ENCODE measurements at regions of chr5 and their contacts with region 1.

Region 1: DNA sequence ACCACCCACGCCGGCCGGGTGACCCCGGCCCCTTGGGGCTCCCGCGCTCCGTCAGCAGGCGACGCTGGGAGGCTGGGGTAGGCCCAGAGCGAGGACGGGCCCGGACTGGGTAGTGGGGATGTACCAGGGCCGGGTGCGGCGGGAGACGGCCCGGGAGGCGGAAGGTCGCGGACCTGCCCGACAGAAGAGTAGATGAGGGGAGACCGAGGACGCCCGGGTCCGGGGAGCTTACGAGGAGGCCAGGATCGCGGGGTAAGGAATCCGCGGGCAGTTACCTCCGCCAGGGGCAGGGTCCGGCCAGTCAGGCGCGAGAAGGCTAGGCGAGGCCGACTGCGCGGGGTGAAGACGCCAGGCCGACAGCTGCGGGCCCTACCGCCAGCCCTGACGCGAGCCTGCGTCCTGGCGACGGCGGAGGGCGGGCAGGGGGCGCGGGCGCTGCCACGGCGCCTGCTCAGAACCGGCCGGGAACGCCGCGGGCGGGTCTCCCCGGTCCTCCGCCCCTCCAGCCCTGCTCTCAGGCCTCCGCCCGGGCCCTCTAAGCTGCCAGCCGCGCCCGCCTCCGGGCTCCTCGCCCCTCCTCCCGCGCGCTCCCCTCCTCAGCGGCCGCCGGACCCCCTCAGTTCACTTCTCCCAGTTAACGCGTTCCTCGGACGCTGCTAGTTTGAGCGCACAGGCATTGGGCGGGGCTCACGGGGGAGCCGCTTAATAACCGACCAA is at the start of gene CPLANE1:
- DNase-seq: peak; percentile 35 to 72
- H3K4me3 ChIP-seq: peak within 1 kb of the TSS; percentile 61 to 76 (median 65)
- H3K27ac ChIP-seq: peak within 1 kb of the TSS; percentile 92 to 95
- H3K4me1 ChIP-seq: peaks cover 0 to 13% of the 10 kb centered on the region in 2 donors
- H3K27me3 ChIP-seq: no peaks in the 10 kb centered on the region
- CTCF ChIP-seq: peak in 1 of 3 donors; percentile 12
- POLR2A ChIP-seq: no peak
- total RNA-seq, gene CPLANE1: 31.0 to 55.5 (median 31.5) TPM

Region 2: GRCh38 chr5:36298516-36298915 is 950.6 kb before region 1 on chr5:
- intact Hi-C with region 1: loop called (anchors 5 kb)
- DNase-seq: no peak
- H3K4me3 ChIP-seq: no peak overlapping the region
- H3K27ac ChIP-seq: no peak overlapping the region
- H3K4me1 ChIP-seq: no peaks in the 10 kb centered on the region
- H3K27me3 ChIP-seq: no peaks in the 10 kb centered on the region
- CTCF ChIP-seq: no peak
- POLR2A ChIP-seq: no peak

Measured in breast epithelium (tissue), 4 donors.